Activated naive CD4-positive, alpha-beta T cell treated with anti-CD3 and anti-CD28 coated beads, Interleukin-2, amount 10 ng/mL, durations not matched to agents 7 days and 5 days (primary cell): ENCODE measurements at regions of chr12 and their contacts with region 1.

Region 1: GRCh38 chr12:18250313-18250916 is 10.9 kb upstream of the PIK3C2G start:
- DNase-seq: no peak
- H3K4me3 Mint-ChIP-seq: no peak overlapping the region
- H3K27ac Mint-ChIP-seq: no peak overlapping the region
- H3K4me1 Mint-ChIP-seq: no peaks in the 10 kb centered on the region
- H3K27me3 Mint-ChIP-seq: no peaks in the 10 kb centered on the region

Region 2: GRCh38 chr12:18207266-18207665 is 43.1 kb before region 1 on chr12:
- CTCF ChIA-PET with region 1: no interaction called
- DNase-seq: no peak
- H3K4me3 Mint-ChIP-seq: no peak overlapping the region
- H3K27ac Mint-ChIP-seq: no peak overlapping the region
- H3K4me1 Mint-ChIP-seq: no peaks in the 10 kb centered on the region
- H3K27me3 Mint-ChIP-seq: no peaks in the 10 kb centered on the region

Region 3: DNA sequence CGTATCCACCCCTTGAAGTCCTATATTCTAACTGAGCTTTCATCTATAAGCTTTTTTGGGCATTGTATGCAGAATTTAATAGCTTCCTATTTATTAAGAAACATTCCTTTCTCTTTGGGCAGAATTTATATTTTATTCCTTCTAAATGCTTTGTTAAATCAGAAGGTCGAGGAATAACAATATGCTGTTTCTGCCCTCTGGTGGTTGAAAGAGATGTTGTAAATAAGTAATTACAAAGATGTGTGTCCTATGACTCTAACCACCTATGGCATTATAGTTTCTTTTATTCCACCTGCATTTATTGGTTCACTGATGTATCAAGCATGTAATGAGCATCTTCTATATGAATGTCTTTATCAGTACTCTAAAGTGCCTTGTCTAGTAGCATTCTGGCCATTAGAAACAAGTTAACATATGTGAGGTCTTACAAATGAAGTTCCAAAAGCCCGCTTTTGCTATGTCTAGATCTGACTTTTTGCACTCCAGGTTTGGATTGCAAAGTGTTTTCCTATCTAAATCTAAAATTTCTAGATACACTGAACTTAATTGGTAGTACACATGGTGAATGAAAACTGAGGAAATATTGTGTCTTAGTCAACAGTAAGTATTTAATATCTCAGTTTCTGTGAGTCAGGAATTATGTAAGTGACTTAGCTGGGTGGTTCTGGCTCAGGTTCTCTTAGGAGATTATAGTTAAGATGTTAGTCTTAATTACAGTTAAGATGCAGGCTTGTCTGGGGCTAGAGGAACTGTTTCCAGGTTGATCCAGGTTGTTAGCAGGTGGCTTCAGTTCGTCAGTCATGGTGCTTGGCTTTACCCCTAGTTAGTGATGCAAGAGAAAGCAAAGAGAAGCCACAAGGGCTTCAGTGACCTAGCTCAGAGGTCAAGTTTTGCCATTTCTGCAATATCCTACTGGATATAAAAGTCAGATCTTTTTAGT is 936.6 kb after region 1 on chr12:
- CTCF ChIA-PET with region 1: interaction called, 13 read pairs
- DNase-seq: no peak
- H3K4me3 Mint-ChIP-seq: no peak overlapping the region
- H3K27ac Mint-ChIP-seq: no peak overlapping the region
- H3K4me1 Mint-ChIP-seq: no peaks in the 10 kb centered on the region
- H3K27me3 Mint-ChIP-seq: no peaks in the 10 kb centered on the region